K562 (cell line): ENCODE measurements at regions of chr6 and their contacts with region 1.

Region 1: DNA sequence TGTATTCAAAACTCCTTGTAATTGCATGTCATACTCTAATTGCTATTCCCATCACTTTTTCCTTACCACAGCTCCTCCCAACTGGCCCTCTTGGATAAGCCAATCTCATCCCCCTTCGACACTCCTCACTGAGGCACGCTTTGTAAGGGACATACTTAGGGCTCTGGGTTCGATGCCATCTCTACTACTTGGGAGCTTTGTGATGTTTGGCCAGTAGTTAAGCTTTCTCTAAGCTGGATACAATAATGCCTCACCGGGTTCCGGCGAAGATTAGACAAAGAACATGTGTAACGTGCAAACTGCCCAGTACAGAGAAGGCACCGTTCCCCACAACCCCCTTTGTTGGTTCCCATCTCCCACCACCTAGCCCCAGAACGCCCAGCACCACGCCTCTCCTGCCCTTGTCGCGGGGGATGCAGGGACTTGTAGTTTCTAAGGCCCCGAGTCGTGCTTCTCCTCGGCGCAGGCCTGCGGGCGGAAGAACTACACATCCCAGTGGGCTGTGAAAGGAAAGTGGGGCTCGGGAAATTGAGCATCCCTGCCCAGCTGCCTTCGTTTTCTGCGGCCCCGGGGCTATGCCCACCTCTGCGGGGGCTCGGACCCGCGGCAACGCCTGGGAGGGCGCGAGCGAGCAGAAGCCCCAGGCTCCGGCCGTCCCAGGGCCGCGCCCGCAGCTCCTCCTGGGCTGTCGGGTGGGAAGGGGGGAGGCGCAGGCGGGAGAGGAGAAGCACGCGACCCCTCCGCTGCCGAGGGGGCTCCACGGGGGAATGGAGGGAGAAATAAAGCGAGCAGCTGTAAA is 1.1 kb upstream of the ZDHHC14 start:
- DNase-seq: peak; percentile 82 to 96 (median 86)
- ATAC-seq: peak; percentile 91
- H3K4me3 ChIP-seq: peak overlapping the region; percentile 77
- H3K27ac ChIP-seq: peak overlapping the region; percentile 75
- H3K4me1 ChIP-seq: peaks cover 21 to 29% of the 10 kb centered on the region in 2 experiments; a peak in 4 of 5 replicates
- H3K27me3 ChIP-seq: no peaks in the 10 kb centered on the region
- CTCF ChIP-seq: no peak; a peak in 1 of 6 replicates
- EP300 ChIP-seq: no peak
- POLR2A ChIP-seq: no peak
- RAD21 ChIP-seq: no peak; a peak in 1 of 4 replicates

Region 2: DNA sequence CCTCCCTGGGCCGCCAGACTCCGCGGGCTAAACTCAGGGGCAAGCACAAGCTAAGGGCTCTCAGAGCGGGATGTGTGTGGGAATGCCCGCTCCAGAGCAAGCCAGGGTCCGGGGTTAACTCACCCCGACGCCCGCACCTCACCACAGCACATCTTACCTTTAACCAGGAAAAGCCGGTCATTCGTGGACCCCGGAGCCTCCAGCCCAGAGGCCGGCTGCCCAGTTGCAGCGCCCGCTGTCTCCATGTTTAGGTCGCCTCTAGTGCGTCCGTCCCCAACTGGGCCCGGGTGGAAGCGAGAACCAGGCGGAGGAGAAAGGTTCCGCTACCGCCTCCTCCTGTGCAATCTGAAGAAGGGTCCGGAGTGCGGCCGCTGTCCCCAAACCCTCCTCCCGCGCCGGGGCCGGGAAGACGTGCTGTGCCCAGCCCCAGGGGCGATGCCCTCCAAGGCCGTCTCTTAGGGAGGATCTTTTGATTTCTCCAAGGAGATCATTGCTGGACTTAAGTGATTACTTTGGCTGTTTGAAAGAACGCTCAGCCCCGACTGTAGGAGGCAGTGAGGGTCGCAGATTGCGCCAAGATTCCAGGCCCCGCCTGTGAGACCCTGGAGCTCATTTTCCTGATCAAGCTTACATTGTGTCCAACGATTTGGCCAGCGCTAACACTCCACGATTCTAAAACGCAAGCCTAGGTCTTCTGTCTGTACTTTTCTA is 56.4 kb before region 1 on chr6 and contains the start of gene TMEM242:
- CTCF ChIA-PET with region 1: no interaction called
- POLR2A ChIA-PET with region 1: interaction called, 15 read pairs
- in situ Hi-C with region 1: no loop called
- intact Hi-C with region 1: loop called (anchors 2 kb)
- DNase-seq: peak; percentile 87 to 97 (median 90)
- ATAC-seq: peak; percentile 92
- H3K4me3 ChIP-seq: peak within 1 kb of the TSS; percentile 66
- H3K27ac ChIP-seq: peak within 1 kb of the TSS; percentile 85
- H3K4me1 ChIP-seq: peaks cover 8 to 19% of the 10 kb centered on the region in 2 experiments
- H3K27me3 ChIP-seq: no peaks in the 10 kb centered on the region
- CTCF ChIP-seq: no peak
- EP300 ChIP-seq: peak; percentile 61
- POLR2A ChIP-seq: peak; percentile 100
- RAD21 ChIP-seq: peak in 1 of 2 experiments; percentile 44; a peak in 3 of 4 replicates
- polyA plus RNA-seq, gene TMEM242: 24.3 to 35.3 TPM

Region 3: DNA sequence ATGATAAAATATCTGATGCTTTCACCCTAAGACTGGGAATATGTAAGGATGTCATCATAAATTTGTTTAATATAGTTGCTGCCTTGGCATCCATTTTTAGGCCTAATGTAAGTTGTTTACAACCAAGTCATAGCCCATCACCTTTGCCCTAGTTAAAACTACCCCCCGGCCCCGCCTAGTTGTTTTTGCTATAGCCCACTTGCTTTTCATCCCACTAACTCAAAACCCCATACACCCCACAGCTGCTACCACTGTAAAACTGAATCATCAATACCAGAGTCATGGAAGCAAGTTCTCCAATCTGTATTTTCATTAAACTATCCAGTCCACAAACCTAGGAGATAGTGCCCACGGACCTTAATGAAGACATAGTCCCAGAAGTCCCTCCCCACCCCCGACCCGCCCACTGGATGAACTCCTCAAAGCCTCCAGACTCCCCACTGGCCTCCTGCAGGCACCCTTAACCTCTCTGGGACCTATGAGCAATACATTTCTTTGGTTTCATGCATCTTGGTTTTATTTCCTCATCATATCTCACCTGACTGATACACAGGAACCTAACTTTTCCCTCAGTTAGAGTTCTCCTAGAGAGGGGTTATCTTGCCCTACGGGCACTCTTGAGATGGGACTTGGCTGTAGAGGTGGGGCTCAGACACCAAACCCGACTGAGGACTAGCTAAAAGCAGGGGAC is 11.4 kb before region 1 on chr6:
- CTCF ChIA-PET with region 1: no interaction called
- POLR2A ChIA-PET with region 1: interaction called, 11 read pairs
- in situ Hi-C with region 1: no loop called
- intact Hi-C with region 1: no loop called
- DNase-seq: no peak
- ATAC-seq: no peak; the same call in 2 of the 3 replicates
- H3K4me3 ChIP-seq: no peak overlapping the region
- H3K27ac ChIP-seq: no peak overlapping the region
- H3K4me1 ChIP-seq: peaks cover 0 to 3% of the 10 kb centered on the region in 2 experiments; a peak in 1 of 5 replicates
- H3K27me3 ChIP-seq: no peaks in the 10 kb centered on the region
- CTCF ChIP-seq: no peak
- EP300 ChIP-seq: no peak
- POLR2A ChIP-seq: no peak
- RAD21 ChIP-seq: no peak

Region 4: DNA sequence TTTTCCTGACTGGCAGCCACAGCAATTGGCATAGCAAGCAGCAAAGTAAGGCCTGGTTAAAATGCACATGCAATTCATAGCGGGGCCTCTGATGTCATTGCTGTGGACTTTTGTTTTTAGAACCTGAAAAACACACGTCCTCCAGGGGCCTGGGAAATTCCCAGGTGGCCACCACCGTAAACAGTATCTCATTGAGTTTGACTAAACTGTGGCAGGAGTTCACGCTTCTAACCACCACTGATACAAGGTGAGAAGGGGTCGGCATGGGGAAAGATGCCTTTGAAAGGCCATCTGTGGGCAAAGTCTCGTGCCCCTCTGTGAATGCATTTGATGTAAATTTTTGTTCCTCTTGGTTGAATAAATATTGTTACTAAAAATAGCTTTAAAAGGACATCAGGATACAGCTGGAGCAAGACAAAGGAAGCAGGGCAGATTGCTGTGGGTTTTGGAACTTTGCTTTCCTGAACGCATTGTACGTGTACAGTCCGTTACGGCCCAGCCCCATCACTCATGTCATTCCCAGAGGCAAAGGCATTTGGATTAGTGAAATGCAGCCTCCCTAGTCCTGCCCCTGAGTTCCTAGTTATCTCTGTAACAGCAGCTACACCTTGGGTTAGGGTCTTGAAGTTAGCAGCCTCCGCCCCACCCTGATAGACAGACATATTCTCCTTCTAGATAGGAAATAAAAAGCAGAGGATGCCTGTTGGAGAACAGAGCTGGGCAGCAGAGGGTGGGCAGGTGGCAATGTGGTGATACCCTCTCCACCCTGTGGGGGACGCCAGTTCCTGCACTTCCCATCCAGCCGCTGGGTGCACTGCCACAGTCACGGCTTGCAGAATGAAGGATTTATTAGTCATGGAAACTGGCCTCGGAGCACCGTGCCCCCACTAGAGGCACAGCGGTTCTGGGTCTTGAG is 81.4 kb after region 1 on chr6:
- CTCF ChIA-PET with region 1: no interaction called
- POLR2A ChIA-PET with region 1: interaction called, 4 read pairs
- in situ Hi-C with region 1: no loop called
- intact Hi-C with region 1: loop called (anchors 2 kb)
- DNase-seq: peak; percentile 76 to 90 (median 82)
- ATAC-seq: peak; percentile 85
- H3K4me3 ChIP-seq: no peak overlapping the region
- H3K27ac ChIP-seq: peak overlapping the region; percentile 54; the same call in 2 of the 3 replicates
- H3K4me1 ChIP-seq: peaks cover 51 to 66% of the 10 kb centered on the region in 2 experiments
- H3K27me3 ChIP-seq: no peaks in the 10 kb centered on the region
- CTCF ChIP-seq: peak; percentile 84 to 98 (median 91)
- EP300 ChIP-seq: peak; percentile 52; the same call in 1 of the 2 replicates
- POLR2A ChIP-seq: no peak
- RAD21 ChIP-seq: peak; percentile 67 to 79

Region 5: DNA sequence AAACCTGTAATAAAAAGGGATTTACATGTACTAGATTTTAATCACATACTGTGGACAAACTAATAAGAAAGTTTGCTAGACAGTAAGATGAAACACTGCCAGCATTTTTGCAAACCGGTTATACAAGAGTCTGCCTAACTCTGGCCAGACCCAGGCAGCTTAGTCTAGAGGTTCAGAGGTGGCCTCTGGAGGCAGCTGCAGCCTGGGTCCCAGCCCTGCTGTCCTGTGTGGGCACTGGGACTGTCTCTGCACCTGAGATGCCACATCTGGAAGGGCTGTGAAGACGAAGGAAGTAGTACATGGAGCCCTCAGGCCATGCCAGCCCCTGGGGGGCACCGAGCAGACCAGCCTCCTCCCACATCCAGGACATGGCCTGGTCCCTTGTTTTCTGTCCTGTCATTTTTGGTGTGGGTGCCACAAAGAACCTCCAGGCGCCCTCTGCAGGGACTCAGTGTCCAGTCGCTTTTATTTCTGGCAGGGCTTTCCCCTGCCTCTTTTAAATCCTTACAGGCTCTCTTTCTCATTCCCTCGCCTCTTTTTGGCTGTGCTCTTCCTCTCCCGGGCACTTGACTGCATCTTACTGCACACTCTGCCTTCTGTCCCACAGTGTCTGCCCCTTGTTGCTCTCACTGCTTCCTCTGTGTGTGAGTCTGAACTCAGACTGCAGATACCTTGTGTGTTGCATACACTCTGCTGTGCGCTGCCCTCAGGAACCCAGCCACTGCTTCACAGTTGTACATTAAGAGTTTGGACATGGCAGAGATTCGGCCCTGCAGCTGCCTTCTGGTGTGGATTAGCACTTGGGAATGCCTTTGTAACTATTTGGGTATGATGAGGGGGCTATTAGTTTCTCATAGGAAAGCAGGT is 217.8 kb after region 1 on chr6:
- CTCF ChIA-PET with region 1: interaction called, 3 read pairs
- POLR2A ChIA-PET with region 1: interaction called, 3 read pairs
- in situ Hi-C with region 1: no loop called
- intact Hi-C with region 1: loop called (anchors 2 kb)
- DNase-seq: peak in 2 of 4 experiments; percentile 63 to 67
- ATAC-seq: peak; percentile 94
- H3K4me3 ChIP-seq: no peak overlapping the region
- H3K27ac ChIP-seq: no peak overlapping the region
- H3K4me1 ChIP-seq: peaks cover 0 to 8% of the 10 kb centered on the region in 2 experiments; a peak in 2 of 5 replicates
- H3K27me3 ChIP-seq: no peaks in the 10 kb centered on the region
- CTCF ChIP-seq: peak; percentile 74 to 85 (median 78)
- EP300 ChIP-seq: no peak
- POLR2A ChIP-seq: no peak
- RAD21 ChIP-seq: peak; percentile 66 to 85